ENCODE measurements at regions of chr20 and their contacts with region 1.

Region 1: DNA sequence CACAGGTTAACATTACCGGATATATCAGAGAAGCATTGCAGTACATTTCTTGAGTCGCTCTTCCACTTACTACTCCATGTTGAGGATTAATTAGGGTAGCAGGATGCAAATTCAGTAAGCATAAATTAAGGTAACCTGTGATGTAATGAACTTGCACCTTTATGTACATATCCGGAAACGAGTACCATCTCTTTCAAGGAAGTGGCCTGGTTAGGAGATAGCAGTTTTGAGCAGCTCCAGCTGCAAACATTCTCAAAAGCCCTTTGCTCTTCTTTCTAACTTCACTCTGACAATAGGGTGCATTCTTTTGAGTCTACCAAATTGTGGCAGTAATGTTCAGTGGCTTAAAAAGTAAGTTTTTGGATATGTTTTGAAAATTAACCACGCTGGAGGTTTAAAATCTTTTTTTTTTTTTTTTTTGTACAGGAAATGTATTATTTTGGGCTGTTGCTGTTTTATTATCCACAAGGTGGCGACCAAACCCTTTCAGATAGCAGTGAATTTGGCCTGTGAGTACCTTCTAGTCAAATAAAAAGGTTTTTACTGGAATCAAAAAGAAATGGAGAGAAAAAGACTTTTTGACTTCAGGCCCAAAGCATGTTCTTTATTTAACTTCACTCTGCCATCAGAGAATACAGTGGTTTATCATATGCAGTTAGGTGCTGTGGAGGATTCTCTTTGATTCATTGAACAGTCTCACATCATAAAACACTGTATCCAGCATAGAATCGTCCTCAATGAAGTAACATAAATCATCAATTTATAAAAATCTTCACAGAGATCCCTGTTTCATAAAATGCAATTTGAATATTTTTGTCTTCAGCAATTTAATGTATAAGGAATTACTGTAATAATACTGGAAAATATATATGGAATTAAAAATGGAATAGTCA is 8.9 kb downstream of the FAM217B start:
- DNase-seq: no peak
- ATAC-seq: peak; percentile 37
- H3K4me3 Mint-ChIP-seq: peak overlapping the region; percentile 20
- H3K27ac Mint-ChIP-seq: peak overlapping the region; percentile 83
- H3K4me1 Mint-ChIP-seq: peaks cover 13% of the 10 kb centered on the region
- H3K27me3 Mint-ChIP-seq: no peaks in the 10 kb centered on the region
- CTCF ChIP-seq: peak; percentile 79

Region 2: DNA sequence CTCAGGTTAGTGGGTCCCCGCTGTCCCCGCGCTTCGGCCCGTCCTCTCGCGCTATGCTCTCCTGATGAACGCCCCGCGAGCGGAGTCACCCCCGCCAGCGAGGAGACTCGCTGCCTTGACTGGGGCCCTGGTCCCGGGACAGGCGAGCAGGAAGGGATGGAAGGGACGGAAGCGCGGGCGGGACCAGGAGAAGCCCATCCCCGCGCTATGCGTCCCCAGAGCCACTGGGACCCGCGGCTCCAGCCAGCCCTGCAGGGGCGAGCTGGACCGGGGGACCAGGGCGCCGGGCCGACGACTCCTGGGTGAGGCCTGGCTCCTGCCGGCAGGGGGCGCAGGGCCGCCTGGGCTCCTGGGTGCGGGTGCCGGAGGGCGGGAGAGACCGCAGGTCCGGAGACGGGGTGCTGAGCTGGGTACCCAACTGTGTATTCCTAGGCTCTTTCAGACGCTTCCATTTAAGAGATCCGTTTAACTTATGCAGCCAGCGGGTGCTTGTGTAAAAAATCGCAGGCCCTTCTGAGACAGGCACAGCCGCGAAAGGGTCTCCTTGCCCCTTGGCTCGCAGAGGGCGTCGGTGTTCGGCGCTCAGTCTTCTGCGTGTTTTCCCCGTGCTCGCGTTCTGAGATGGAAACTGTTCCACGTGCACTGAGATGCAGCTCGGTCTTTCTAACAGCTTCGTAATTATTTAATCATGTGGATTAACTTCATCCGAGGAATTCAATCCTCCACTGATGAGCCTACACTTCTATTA is 15.1 kb before region 1 on chr20:
- CTCF ChIA-PET with region 1: interaction called, 15 read pairs
- POLR2A ChIA-PET with region 1: interaction called, 7 read pairs
- intact Hi-C with region 1: no loop called
- DNase-seq: peak; percentile 79
- ATAC-seq: peak; percentile 89
- H3K4me3 Mint-ChIP-seq: peak overlapping the region; percentile 78
- H3K27ac Mint-ChIP-seq: no peak overlapping the region
- H3K4me1 Mint-ChIP-seq: peaks cover 25% of the 10 kb centered on the region
- H3K27me3 Mint-ChIP-seq: peaks cover 3% of the 10 kb centered on the region
- CTCF ChIP-seq: peak; percentile 73

Region 3: GRCh38 chr20:61328911-61329558 is 1380.0 kb after region 1 on chr20:
- CTCF ChIA-PET with region 1: no interaction called
- POLR2A ChIA-PET with region 1: no interaction called
- intact Hi-C with region 1: no loop called
- DNase-seq: no peak
- ATAC-seq: no peak
- H3K4me3 Mint-ChIP-seq: no peak overlapping the region
- H3K27ac Mint-ChIP-seq: no peak overlapping the region
- H3K4me1 Mint-ChIP-seq: no peaks in the 10 kb centered on the region
- H3K27me3 Mint-ChIP-seq: no peaks in the 10 kb centered on the region
- CTCF ChIP-seq: no peak

Region 4: GRCh38 chr20:61886721-61887594 is 1937.9 kb after region 1 on chr20:
- CTCF ChIA-PET with region 1: interaction called, 4 read pairs
- POLR2A ChIA-PET with region 1: no interaction called
- intact Hi-C with region 1: loop called (anchors 5 kb)
- DNase-seq: no peak
- ATAC-seq: no peak
- H3K4me3 Mint-ChIP-seq: no peak overlapping the region
- H3K27ac Mint-ChIP-seq: no peak overlapping the region
- H3K4me1 Mint-ChIP-seq: peaks cover 2% of the 10 kb centered on the region
- H3K27me3 Mint-ChIP-seq: no peaks in the 10 kb centered on the region
- CTCF ChIP-seq: peak; percentile 44